Activated CD4-positive, alpha-beta memory T cell treated with anti-CD3 and anti-CD28 coated beads for 36 hours (primary cell): ENCODE measurements at regions of chr1 and their contacts with region 1.

Region 1: DNA sequence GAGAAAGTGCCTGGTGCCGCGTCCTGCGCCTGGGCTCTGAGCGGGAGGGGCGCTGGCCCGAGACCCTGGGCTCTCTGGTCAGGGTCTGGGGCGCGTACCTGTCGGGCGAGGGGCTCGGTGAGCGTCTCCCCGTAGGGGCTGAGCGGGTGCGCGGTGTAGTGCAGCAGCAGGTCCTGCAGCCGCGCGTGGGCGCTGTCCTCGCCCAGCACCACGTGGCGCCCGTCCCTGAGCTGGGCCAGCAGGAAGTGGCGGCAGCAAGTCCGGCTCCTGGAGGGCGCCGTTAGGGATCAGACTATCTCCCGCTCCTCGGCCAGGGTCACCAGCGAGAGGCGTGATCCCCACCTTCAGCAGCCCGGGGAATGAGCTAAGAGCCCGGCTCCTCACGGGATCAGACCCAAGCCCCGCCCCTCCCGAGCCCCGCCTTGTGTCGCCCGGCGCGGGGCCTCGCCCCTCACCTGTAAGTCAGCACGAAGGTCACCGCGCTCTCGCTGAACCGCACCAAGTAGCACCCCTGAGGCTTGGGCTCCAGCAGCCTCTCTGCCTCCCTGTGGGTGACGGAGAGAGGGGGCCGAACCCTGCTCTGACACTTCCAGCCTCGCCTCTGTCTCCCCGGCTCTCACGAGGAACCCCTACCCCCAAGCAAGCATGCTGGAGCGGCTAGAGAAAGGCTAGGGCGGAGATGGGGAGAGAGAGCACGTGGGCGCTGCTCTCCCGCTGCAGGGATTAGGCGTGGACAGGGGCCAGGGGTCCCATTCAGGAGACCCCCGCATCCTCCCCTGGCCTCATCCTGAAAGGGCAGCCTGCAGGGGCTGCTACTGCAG is 2.7 kb downstream of the SH2D2A start:
- DNase-seq: peak; percentile 81
- H3K4me3 Mint-ChIP-seq: peak overlapping the region; percentile 96
- H3K27ac Mint-ChIP-seq: peak overlapping the region; percentile 99
- H3K4me1 Mint-ChIP-seq: peaks cover 59% of the 10 kb centered on the region
- H3K27me3 Mint-ChIP-seq: no peaks in the 10 kb centered on the region

Region 2: GRCh38 chr1:156740679-156741612 is 73.0 kb before region 1 on chr1 and contains the start of gene MRPL24:
- CTCF ChIA-PET with region 1: no interaction called
- POLR2A ChIA-PET with region 1: no interaction called
- intact Hi-C with region 1: loop called (anchors 5 kb)
- DNase-seq: peak; percentile 98
- H3K4me3 Mint-ChIP-seq: peak within 1 kb of the TSS; percentile 89
- H3K27ac Mint-ChIP-seq: peak within 1 kb of the TSS; percentile 95
- H3K4me1 Mint-ChIP-seq: peaks cover 47% of the 10 kb centered on the region
- H3K27me3 Mint-ChIP-seq: no peaks in the 10 kb centered on the region
- total RNA-seq, gene MRPL24: 105 to 106 TPM

Region 3: DNA sequence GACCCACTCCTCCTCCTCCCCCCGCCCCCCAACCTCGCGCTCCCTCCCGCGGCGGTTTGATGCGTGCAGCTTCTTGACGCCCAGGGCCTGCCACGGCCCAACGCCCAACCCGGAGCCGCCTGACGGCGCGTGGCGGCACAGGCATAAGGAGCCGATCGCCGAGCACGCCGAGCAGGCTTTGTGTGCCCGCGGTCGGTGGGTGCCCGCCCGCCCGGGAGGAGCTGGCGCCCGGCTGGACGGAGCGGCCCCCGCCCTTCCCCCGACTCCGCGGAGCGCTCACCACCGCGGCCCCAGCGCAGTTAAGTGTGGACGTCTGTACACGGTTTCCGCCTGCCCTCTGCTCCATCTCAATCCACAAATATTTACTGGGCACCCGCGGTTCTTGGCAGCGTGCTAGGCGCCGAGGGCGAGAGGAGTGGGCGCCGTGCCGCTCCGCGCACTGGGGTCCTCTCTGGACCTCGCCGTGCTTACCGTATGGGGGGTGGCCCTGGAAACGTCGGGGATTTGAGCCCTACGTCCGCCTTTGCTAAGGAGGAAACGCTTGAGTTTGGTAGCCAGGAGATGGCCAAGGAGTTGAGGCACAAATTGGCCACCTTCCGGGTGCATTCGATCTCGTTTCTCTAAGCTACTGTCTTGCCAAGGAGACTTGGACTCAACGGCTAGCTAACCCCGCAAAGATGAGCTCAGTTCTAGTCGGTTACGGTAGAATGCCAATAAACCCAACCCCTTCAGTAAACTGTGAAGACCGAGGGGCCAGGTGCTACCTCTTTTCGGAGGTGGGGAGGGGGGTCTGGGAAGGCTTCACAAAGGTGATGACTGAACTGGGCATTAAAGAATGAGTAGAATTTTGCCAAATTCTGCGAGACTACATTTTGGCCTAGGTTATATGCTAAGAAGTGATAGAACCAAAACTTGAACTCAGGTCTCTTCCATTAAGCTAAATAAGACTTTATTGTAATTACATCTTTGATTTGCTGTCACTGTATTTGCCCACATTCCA is 61.9 kb before region 1 on chr1:
- CTCF ChIA-PET with region 1: no interaction called
- POLR2A ChIA-PET with region 1: interaction called, 6 read pairs
- intact Hi-C with region 1: loop called (anchors 2 kb)
- DNase-seq: peak; percentile 99
- H3K4me3 Mint-ChIP-seq: peak overlapping the region; percentile 93
- H3K27ac Mint-ChIP-seq: peak overlapping the region; percentile 93
- H3K4me1 Mint-ChIP-seq: peaks cover 27% of the 10 kb centered on the region
- H3K27me3 Mint-ChIP-seq: no peaks in the 10 kb centered on the region

Region 4: GRCh38 chr1:156767101-156767878 is 46.7 kb before region 1 on chr1 and contains the start of gene PRCC:
- CTCF ChIA-PET with region 1: interaction called, 4 read pairs
- POLR2A ChIA-PET with region 1: no interaction called
- intact Hi-C with region 1: loop called (anchors 1 kb)
- DNase-seq: peak; percentile 99
- H3K4me3 Mint-ChIP-seq: no peak within 1 kb of the TSS
- H3K27ac Mint-ChIP-seq: no peak within 1 kb of the TSS
- H3K4me1 Mint-ChIP-seq: peaks cover 36% of the 10 kb centered on the region
- H3K27me3 Mint-ChIP-seq: no peaks in the 10 kb centered on the region
- total RNA-seq, gene PRCC: 58.6 to 67.2 TPM

Region 5: DNA sequence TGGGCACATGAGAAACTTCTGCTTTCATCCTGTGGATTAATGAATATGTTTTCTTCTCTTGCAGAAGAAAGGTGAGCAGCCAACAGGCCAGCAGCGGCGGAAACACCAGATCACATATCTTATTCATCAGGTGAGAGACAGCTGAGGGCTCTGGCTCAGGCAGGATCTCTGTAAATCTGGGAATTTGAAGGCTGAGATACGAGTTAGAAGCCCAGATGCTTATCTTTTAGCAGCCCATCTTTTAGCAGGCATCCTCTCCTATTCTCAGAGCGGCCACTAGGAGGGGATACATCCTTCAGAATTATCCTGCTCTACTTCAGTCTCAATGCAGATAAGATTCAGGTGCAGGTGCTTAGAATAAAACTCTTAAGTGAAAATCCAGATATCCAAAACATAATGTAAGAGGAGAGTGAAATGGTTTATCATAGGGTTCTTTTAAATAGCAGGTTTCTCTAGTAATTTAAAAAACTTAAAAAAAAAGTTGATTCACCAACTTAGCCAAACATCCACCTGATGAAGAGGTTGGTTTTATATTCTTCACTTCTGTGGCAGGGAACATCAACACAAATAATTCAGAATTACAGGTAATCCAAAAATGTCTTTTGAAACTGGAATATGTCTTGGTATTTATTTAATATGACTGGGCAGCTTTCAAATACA is 16.6 kb before region 1 on chr1:
- CTCF ChIA-PET with region 1: interaction called, 12 read pairs
- POLR2A ChIA-PET with region 1: interaction called, 17 read pairs
- intact Hi-C with region 1: no loop called
- DNase-seq: peak; percentile 71
- H3K4me3 Mint-ChIP-seq: no peak overlapping the region
- H3K27ac Mint-ChIP-seq: no peak overlapping the region
- H3K4me1 Mint-ChIP-seq: peaks cover 21% of the 10 kb centered on the region
- H3K27me3 Mint-ChIP-seq: no peaks in the 10 kb centered on the region

Region 6: DNA sequence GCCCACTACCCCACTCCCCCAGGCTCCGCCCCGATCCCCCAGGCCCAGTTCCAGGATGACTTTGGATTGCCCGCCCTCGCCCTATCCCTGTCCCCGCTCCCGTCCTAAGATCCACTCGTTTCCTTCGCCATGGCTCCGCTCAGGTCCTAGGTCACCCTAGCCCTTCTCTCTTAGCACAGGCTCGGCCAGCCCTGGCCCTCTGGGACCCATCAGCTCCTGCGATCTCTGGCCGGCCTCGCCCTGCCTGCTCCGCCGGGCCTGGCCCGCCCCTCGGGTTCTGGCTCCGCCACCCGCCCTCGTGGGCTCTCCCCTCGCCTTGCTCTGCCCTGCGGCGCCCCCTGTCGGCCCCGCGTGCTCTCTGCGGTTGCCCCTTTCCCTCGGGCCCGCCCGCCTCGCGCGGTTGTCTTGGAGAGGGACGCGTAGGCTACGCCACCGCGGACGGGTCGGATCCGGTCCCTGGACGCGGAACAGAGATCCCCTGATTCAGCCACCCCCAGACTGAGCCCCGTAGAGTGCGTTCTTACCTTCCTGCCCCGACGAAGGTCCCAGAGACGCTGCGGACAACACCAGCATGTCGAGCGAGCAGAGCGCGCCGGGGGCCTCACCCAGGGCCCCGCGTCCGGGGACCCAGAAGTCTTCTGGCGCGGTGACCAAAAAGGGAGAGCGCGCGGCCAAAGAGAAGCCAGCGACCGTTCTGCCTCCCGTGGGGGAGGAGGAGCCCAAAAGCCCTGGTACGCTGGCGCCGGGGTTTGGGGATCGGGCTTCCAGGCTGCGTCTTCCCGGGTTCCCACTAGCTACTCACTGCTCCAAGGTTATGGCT is 106.5 kb after region 1 on chr1 and contains the start of gene LRRC71:
- CTCF ChIA-PET with region 1: no interaction called
- POLR2A ChIA-PET with region 1: no interaction called
- intact Hi-C with region 1: no loop called
- DNase-seq: peak; percentile 79
- H3K4me3 Mint-ChIP-seq: no peak within 1 kb of the TSS
- H3K27ac Mint-ChIP-seq: no peak within 1 kb of the TSS
- H3K4me1 Mint-ChIP-seq: peaks cover 8% of the 10 kb centered on the region
- H3K27me3 Mint-ChIP-seq: peaks cover 66% of the 10 kb centered on the region
- total RNA-seq, gene LRRC71: not detected

Region 7: GRCh38 chr1:157138220-157139051 is 324.5 kb after region 1 on chr1 and contains the start of gene ETV3:
- CTCF ChIA-PET with region 1: no interaction called
- POLR2A ChIA-PET with region 1: no interaction called
- intact Hi-C with region 1: loop called (anchors 5 kb)
- DNase-seq: peak; percentile 94
- H3K4me3 Mint-ChIP-seq: peak within 1 kb of the TSS; percentile 98
- H3K27ac Mint-ChIP-seq: peak within 1 kb of the TSS; percentile 88
- H3K4me1 Mint-ChIP-seq: peaks cover 73% of the 10 kb centered on the region
- H3K27me3 Mint-ChIP-seq: no peaks in the 10 kb centered on the region
- total RNA-seq, gene ETV3: 30.9 to 32.4 TPM